ENCODE measurements at regions of chr11 and their contacts with region 1.

Region 1: DNA sequence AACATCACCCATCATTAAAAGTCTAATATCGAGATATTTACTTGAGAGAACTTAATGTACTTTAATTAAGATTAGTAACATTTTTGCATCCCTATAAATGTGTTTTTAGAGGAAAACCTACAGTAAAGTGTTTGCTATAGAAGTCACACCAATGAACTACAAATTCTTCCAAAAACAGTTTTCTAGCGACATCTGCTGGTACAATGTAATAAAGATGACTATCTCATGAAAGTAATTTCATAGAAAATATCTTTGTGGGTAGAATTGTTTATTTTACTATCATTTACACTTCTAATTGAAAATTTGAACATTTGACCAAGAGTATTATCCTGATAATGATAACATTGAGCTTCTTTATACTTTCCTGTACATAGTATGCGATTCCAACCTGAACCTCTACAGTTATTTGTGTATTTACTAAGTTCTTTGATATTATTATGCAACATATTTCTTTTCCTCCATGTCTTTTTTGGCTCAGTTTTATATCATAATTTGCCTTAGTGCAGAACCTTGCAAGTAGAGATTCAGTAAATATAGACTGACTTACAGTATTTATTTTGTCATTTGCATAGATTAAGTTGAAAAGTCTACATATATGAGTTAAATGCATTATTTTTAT is 252.7 kb downstream of the TMEM135 start:
- DNase-seq: peak; percentile 24
- H3K4me3 ChIP-seq: no peak overlapping the region
- H3K27ac ChIP-seq: no peak overlapping the region
- H3K27me3 ChIP-seq: no peaks in the 10 kb centered on the region
- CTCF ChIP-seq: peak; percentile 62

Region 2: GRCh38 chr11:86930957-86931547 is 359.4 kb before region 1 on chr11:
- CTCF ChIA-PET with region 1: interaction called, 23 read pairs
- POLR2A ChIA-PET with region 1: no interaction called
- DNase-seq: no peak
- H3K4me3 ChIP-seq: no peak overlapping the region
- H3K27ac ChIP-seq: no peak overlapping the region
- H3K27me3 ChIP-seq: no peaks in the 10 kb centered on the region
- CTCF ChIP-seq: no peak

Region 3: GRCh38 chr11:86947541-86947940 is 342.9 kb before region 1 on chr11:
- CTCF ChIA-PET with region 1: interaction called, 21 read pairs
- POLR2A ChIA-PET with region 1: no interaction called
- DNase-seq: no peak
- H3K4me3 ChIP-seq: no peak overlapping the region
- H3K27ac ChIP-seq: no peak overlapping the region
- H3K27me3 ChIP-seq: no peaks in the 10 kb centered on the region
- CTCF ChIP-seq: no peak

Region 4: DNA sequence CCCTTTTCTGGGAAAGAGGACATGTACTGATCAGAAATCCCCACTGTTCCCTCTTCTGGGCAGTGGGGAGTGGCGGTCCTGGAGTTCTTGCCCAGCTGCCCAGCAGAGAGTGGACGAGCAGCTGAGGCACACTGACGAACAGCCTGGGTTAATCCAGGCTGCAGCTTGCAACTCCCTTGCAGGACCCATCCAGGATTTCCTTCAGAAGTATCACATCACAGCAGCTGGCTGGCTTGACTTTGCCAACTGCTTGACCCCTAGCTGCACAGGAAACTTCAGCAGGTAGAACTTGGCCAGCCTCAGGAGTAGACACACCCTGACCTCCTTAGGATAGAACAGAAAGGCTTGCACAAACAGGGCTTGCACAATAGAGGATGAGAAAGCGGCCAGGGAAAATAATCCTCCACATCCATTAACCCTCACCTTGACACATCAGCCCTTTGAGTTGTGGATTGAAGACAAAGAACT is 307.4 kb before region 1 on chr11:
- CTCF ChIA-PET with region 1: interaction called, 14 read pairs
- POLR2A ChIA-PET with region 1: no interaction called
- DNase-seq: no peak
- H3K4me3 ChIP-seq: no peak overlapping the region
- H3K27ac ChIP-seq: no peak overlapping the region
- H3K27me3 ChIP-seq: no peaks in the 10 kb centered on the region
- CTCF ChIP-seq: no peak

Region 5: DNA sequence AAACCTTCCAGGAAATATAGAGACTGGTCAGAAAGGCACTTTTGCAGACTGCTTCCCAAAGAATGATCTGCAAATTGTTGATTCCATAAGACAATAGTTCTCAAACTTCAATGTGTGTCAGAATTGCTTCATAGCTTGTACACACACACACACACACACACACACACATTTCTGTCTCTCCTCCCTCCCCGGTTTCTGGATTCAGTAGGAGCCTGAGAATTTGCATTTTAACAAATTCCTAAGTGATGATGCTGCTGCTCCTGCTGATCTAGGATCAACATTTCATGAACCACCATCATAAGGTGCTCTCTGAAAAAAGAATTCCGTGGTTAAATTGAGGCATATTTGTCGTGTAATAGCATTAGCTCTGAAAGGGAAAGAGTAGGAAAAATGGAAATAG is 299.9 kb before region 1 on chr11:
- CTCF ChIA-PET with region 1: interaction called, 67 read pairs
- POLR2A ChIA-PET with region 1: no interaction called
- DNase-seq: no peak
- H3K4me3 ChIP-seq: no peak overlapping the region
- H3K27ac ChIP-seq: no peak overlapping the region
- H3K27me3 ChIP-seq: no peaks in the 10 kb centered on the region
- CTCF ChIP-seq: no peak

Region 6: DNA sequence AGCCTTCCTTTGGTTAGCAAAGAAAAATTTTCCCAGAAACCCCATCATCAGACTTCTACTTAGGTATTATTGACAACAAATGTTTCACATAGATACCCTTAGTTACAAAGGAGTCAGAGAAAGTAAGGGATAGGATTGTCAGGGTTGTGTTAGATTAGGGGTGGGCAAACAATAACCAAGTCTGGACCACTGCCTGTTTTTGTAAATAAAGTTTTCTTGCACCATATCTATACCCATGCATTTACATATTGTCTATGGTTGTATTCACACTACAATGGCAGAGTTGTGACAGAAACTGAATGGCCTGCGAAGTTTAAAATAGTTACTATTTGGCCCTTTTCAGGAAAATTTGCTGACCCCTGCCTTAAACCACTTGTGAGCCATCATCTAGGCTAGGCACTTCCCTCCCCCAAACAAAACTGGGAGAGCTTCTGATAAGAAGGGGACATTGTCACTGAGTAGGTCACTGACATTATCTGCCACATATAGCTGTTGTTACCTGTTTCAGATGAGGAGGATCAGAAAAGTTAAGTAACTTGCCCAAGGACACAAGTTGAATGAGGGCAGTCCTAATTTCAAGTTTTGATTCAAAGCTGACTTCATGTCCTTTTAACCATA is 293.4 kb before region 1 on chr11:
- CTCF ChIA-PET with region 1: interaction called, 67 read pairs
- POLR2A ChIA-PET with region 1: no interaction called
- DNase-seq: no peak
- H3K4me3 ChIP-seq: no peak overlapping the region
- H3K27ac ChIP-seq: no peak overlapping the region
- H3K27me3 ChIP-seq: no peaks in the 10 kb centered on the region
- CTCF ChIP-seq: no peak

Region 7: DNA sequence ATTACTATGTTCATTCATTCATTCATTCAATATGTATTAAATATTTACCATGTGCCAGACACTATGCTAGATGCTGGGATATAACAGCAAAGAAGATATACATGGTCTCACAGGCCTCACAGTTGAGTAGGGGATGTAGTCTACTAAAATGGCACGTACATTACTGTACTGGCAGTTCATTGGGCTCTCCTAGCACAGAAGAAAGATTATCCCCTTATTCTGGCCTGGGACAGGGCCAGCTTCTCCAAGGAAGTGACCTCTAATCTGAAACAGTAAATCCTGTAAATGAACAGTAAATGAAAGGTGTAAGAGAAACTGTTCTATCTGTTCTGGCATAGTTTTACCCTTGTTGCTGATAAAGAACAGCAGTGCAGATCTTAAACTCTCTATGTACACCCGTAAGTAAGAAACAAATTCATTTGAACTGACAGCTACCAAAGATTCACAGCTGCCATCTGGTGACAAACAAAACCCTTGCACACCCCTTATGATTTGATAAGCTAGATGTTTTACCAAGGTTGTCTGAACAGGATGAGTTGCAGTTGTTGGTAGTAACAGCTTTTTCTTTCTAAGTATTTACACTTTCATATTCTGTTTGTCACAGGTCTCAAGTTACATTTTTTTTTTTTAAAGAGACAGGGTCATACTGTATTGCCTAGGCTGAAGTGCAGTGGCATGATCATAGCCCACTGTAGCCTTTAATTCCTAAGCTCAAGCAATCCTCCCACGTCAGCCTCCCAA is 10.4 kb after region 1 on chr11:
- CTCF ChIA-PET with region 1: interaction called, 19 read pairs
- POLR2A ChIA-PET with region 1: no interaction called
- DNase-seq: no peak
- H3K4me3 ChIP-seq: no peak overlapping the region
- H3K27ac ChIP-seq: no peak overlapping the region
- H3K27me3 ChIP-seq: no peaks in the 10 kb centered on the region
- CTCF ChIP-seq: no peak

Region 8: GRCh38 chr11:87352759-87353707 is 62.6 kb after region 1 on chr11:
- CTCF ChIA-PET with region 1: no interaction called
- POLR2A ChIA-PET with region 1: no interaction called
- DNase-seq: peak; percentile 32
- H3K4me3 ChIP-seq: no peak overlapping the region
- H3K27ac ChIP-seq: no peak overlapping the region
- H3K27me3 ChIP-seq: peaks cover 2% of the 10 kb centered on the region
- CTCF ChIP-seq: peak; percentile 99